K562 (cell line): ENCODE measurements at regions of chr4 and their contacts with region 1.

Region 1: DNA sequence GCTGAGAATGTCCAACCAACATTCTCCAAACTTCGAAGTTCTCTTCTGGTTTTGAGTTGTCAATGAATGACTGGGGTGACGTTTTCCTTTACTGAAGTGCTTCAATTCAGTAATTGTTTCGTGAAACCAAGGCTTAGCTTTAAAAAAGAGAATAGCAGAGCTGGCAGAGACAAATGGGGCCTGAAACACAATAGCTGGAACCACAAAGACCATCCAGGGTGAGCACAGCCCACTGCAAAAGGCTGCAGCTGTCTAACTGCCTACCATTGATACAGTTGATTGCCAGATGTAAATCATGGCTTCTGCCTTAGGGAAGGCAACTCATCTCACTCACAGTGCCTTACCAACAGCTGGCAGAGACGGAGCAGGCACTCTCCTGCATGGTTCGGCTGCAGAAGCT is 78.7 kb upstream of the ZNF518B start:
- DNase-seq: no peak
- ATAC-seq: no peak
- H3K4me3 ChIP-seq: no peak overlapping the region
- H3K27ac ChIP-seq: no peak overlapping the region
- H3K4me1 ChIP-seq: no peaks in the 10 kb centered on the region
- H3K27me3 ChIP-seq: peaks cover 0 to 5% of the 10 kb centered on the region in 2 experiments; a peak in 2 of 5 replicates
- CTCF ChIP-seq: no peak
- EP300 ChIP-seq: no peak
- POLR2A ChIP-seq: no peak
- RAD21 ChIP-seq: no peak

Region 2: GRCh38 chr4:10074767-10075105 is 461.2 kb before region 1 on chr4:
- CTCF ChIA-PET with region 1: no interaction called
- POLR2A ChIA-PET with region 1: no interaction called
- in situ Hi-C with region 1: no loop called
- intact Hi-C with region 1: loop called (anchors 5 kb)
- DNase-seq: peak; percentile 37 to 44 (median 42)
- ATAC-seq: peak; percentile 77
- H3K4me3 ChIP-seq: no peak overlapping the region
- H3K27ac ChIP-seq: no peak overlapping the region
- H3K4me1 ChIP-seq: peaks cover 0 to 7% of the 10 kb centered on the region in 2 experiments; a peak in 2 of 5 replicates
- H3K27me3 ChIP-seq: no peaks in the 10 kb centered on the region; a peak in 1 of 5 replicates
- CTCF ChIP-seq: peak; percentile 46 to 71 (median 65)
- EP300 ChIP-seq: no peak
- POLR2A ChIP-seq: peak; percentile 29; the same call in 1 of the 2 replicates
- RAD21 ChIP-seq: peak in 1 of 2 experiments; percentile 35; a peak in 1 of 4 replicates

Region 3: GRCh38 chr4:10380735-10381134 is 155.2 kb before region 1 on chr4:
- CTCF ChIA-PET with region 1: no interaction called
- POLR2A ChIA-PET with region 1: no interaction called
- in situ Hi-C with region 1: no loop called
- intact Hi-C with region 1: no loop called
- DNase-seq: no peak
- ATAC-seq: no peak
- H3K4me3 ChIP-seq: no peak overlapping the region
- H3K27ac ChIP-seq: no peak overlapping the region
- H3K4me1 ChIP-seq: peaks cover 3 to 7% of the 10 kb centered on the region in 2 experiments; a peak in 3 of 5 replicates
- H3K27me3 ChIP-seq: no peaks in the 10 kb centered on the region
- CTCF ChIP-seq: no peak
- EP300 ChIP-seq: no peak
- POLR2A ChIP-seq: no peak
- RAD21 ChIP-seq: no peak